HepG2 (cell line): ENCODE measurements at regions of chr17 and their contacts with region 1.

Region 1: GRCh38 chr17:72187556-72187955 is 66.7 kb downstream of the SOX9 start:
- DNase-seq: no peak
- ATAC-seq: no peak
- H3K4me3 ChIP-seq: no peak overlapping the region
- H3K27ac ChIP-seq: no peak overlapping the region
- H3K4me1 ChIP-seq: peaks cover 10% of the 10 kb centered on the region
- H3K27me3 ChIP-seq: peaks cover 0 to 17% of the 10 kb centered on the region in 2 experiments; a peak in 4 of 5 replicates
- CTCF ChIP-seq: no peak
- EP300 ChIP-seq: no peak
- POLR2A ChIP-seq: no peak
- RAD21 ChIP-seq: no peak

Region 2: GRCh38 chr17:72306037-72306436 is 118.5 kb after region 1 on chr17:
- CTCF ChIA-PET with region 1: no interaction called
- POLR2A ChIA-PET with region 1: no interaction called
- in situ Hi-C with region 1: no loop called
- intact Hi-C with region 1: loop called (anchors 10 kb)
- DNase-seq: no peak
- ATAC-seq: no peak
- H3K4me3 ChIP-seq: peak overlapping the region in 1 of 3 experiments; percentile 14; a peak in 1 of 6 replicates
- H3K27ac ChIP-seq: no peak overlapping the region
- H3K4me1 ChIP-seq: peaks cover 43% of the 10 kb centered on the region
- H3K27me3 ChIP-seq: peaks cover 3 to 4% of the 10 kb centered on the region in 2 experiments; a peak in 4 of 5 replicates
- CTCF ChIP-seq: no peak
- EP300 ChIP-seq: no peak
- POLR2A ChIP-seq: no peak
- RAD21 ChIP-seq: no peak